Posterior vena cava (tissue), 2 donors: ENCODE measurements at regions of chr18 and their contacts with region 1.

Region 1: GRCh38 chr18:49561289-49562193 is at the start of gene LIPG:
- DNase-seq: no peak
- total RNA-seq, gene LIPG: 1.2 to 1.7 TPM

Region 2: GRCh38 chr18:49304751-49305150 is 256.8 kb before region 1 on chr18:
- intact Hi-C with region 1: no loop called
- DNase-seq: no peak

Region 3: GRCh38 chr18:49548229-49548636 is 13.3 kb before region 1 on chr18:
- intact Hi-C with region 1: no loop called
- DNase-seq: no peak

Region 4: DNA sequence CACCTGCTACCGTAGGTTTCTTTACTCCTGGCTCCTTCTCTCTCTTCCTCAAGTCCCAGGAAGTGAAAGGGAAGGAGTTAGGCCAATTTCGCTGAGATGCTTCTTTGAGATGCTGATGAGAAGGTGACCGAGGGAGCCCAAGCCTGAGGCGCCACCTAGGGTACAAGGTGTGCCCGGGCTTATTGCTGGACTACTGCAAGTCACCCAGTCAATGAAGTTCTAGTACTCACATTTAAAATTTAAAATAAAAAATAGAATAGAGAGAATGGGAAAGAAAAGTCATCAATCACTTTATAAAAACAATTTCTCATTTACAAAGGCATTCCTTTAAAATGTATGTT is 206.5 kb after region 1 on chr18:
- intact Hi-C with region 1: loop called in 1 of 2 experiments (anchors 10 kb)
- DNase-seq: peak; percentile 44

Region 5: GRCh38 chr18:49784427-49785185 is 223.1 kb after region 1 on chr18:
- intact Hi-C with region 1: loop called in 1 of 2 experiments (anchors 5 kb)
- DNase-seq: no peak

Region 6: GRCh38 chr18:49858309-49859020 is 296.9 kb after region 1 on chr18:
- intact Hi-C with region 1: loop called (anchors 5 to 10 kb)
- DNase-seq: peak; percentile 85